Activated CD4-positive, alpha-beta memory T cell treated with anti-CD3 and anti-CD28 coated beads for 36 hours (primary cell): ENCODE measurements at regions of chr1 and their contacts with region 1.

Region 1: DNA sequence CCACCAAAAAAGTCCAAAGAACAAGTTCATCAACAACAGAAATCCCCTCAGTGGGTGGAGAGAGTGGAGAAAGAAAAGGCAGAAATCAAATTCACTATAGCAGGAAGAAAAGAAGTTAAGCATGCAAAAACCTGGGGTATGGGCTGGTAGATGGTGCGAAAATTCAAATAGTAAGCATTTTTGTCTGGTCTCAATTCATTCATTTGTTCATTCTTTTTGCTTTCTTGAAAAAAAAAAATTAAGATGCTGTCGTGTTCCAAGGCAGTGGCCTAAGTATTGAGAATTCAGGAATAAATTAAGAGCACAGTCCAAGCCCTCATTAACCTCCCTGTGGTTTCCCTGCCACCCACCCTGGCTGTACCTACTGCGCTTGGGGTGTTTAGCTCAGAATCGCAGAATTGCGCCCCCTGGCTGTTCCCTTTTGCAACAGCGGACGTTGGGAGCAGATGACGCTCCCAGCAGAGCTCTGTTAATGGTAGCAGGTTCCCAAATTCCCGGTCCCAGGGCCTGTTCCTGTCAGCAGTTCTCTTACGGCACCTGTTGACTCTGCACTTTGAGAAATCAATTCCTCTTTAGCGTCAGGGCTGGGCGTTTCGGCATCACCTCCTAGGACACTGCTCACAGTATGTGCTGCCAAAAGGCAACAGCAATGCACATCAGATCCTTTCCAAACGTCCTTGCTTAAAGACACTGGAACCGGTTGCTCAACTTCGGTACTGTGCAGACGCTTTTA is 34.0 kb upstream of the SSX2IP start:
- DNase-seq: peak; percentile 71
- H3K4me3 Mint-ChIP-seq: no peak overlapping the region
- H3K27ac Mint-ChIP-seq: no peak overlapping the region
- H3K4me1 Mint-ChIP-seq: peaks cover 14% of the 10 kb centered on the region
- H3K27me3 Mint-ChIP-seq: no peaks in the 10 kb centered on the region

Region 2: DNA sequence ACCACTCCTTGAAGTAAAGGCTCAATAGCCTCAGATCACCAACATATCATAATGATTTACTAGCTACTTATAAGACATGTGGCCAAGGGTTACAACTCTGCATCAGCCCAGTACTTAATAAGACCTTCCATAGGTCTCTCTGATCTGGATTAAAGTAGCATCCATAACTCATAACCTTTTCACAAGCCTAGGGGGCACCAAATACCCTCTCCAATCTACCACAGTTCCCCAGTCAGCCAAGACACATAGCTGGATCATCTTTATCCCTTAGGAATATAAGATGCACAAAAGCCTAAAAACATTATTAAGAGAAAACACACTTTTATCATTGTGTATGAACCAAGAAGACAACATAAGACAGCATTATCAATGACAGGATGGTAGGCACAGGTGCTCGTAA is 56.1 kb before region 1 on chr1:
- CTCF ChIA-PET with region 1: interaction called, 18 read pairs
- POLR2A ChIA-PET with region 1: no interaction called
- intact Hi-C with region 1: loop called (anchors 5 kb)
- DNase-seq: no peak
- H3K4me3 Mint-ChIP-seq: no peak overlapping the region
- H3K27ac Mint-ChIP-seq: no peak overlapping the region
- H3K4me1 Mint-ChIP-seq: peaks cover 2% of the 10 kb centered on the region
- H3K27me3 Mint-ChIP-seq: no peaks in the 10 kb centered on the region

Region 3: GRCh38 chr1:84690397-84691121 is 33.7 kb before region 1 on chr1 and contains the start of gene SSX2IP:
- CTCF ChIA-PET with region 1: interaction called, 16 read pairs
- POLR2A ChIA-PET with region 1: interaction called, 3 read pairs
- intact Hi-C with region 1: loop called (anchors 1 kb)
- DNase-seq: peak; percentile 99
- H3K4me3 Mint-ChIP-seq: peak within 1 kb of the TSS; percentile 94
- H3K27ac Mint-ChIP-seq: peak within 1 kb of the TSS; percentile 80
- H3K4me1 Mint-ChIP-seq: peaks cover 53% of the 10 kb centered on the region
- H3K27me3 Mint-ChIP-seq: peaks cover 2% of the 10 kb centered on the region
- total RNA-seq, gene SSX2IP: 10.9 to 11.6 TPM

Region 4: GRCh38 chr1:84712276-84712874 is 11.9 kb before region 1 on chr1:
- CTCF ChIA-PET with region 1: interaction called, 14 read pairs
- POLR2A ChIA-PET with region 1: no interaction called
- intact Hi-C with region 1: no loop called
- DNase-seq: no peak
- H3K4me3 Mint-ChIP-seq: no peak overlapping the region
- H3K27ac Mint-ChIP-seq: no peak overlapping the region
- H3K4me1 Mint-ChIP-seq: no peaks in the 10 kb centered on the region
- H3K27me3 Mint-ChIP-seq: peaks cover 2% of the 10 kb centered on the region

Region 5: DNA sequence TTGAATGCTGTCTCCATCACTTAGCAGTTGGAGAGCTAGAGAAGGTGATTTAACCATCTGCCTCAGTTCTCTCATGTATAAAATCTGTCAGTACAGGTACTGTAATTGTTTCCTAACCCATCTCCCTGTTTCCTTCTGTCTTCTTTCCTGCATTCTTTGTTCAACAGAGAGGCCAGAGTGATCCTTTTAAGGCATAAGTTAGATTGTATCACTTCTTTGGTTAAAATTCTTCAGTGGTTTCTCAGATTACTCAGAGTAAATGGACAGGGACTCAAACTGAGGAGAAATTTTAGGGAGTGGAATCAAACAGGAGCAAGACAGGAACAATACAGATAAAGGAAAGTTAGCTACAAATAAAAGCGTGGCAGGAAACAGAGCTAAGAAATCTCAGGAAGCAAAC is 11.2 kb after region 1 on chr1:
- CTCF ChIA-PET with region 1: interaction called, 19 read pairs
- POLR2A ChIA-PET with region 1: interaction called, 3 read pairs
- intact Hi-C with region 1: no loop called
- DNase-seq: no peak
- H3K4me3 Mint-ChIP-seq: no peak overlapping the region
- H3K27ac Mint-ChIP-seq: no peak overlapping the region
- H3K4me1 Mint-ChIP-seq: no peaks in the 10 kb centered on the region
- H3K27me3 Mint-ChIP-seq: peaks cover 36% of the 10 kb centered on the region

Region 6: GRCh38 chr1:84742653-84743052 is 18.4 kb after region 1 on chr1:
- CTCF ChIA-PET with region 1: interaction called, 19 read pairs
- POLR2A ChIA-PET with region 1: interaction called, 3 read pairs
- intact Hi-C with region 1: no loop called
- DNase-seq: peak; percentile 46
- H3K4me3 Mint-ChIP-seq: no peak overlapping the region
- H3K27ac Mint-ChIP-seq: no peak overlapping the region
- H3K4me1 Mint-ChIP-seq: peaks cover 17% of the 10 kb centered on the region
- H3K27me3 Mint-ChIP-seq: peaks cover 3% of the 10 kb centered on the region

Region 7: DNA sequence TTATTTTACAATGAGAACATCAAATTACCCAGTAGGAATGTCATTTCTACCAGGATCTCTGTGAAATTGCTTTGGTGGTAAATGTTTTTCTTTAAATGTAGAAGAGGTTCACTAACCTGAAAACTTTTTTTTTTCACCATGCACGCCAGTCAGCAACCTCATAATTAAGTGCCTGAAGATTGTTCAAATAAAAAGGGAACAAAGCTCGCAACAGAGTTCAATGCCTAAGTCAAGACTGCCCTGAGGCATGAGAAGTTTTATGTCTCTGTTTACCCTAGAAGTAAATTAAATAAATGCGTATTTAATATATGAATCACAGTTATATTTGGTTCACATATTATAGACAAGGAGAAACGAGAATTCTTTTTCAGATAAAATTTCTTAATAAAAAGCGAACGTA is 490.4 kb after region 1 on chr1:
- CTCF ChIA-PET with region 1: no interaction called
- POLR2A ChIA-PET with region 1: no interaction called
- intact Hi-C with region 1: no loop called
- DNase-seq: no peak
- H3K4me3 Mint-ChIP-seq: no peak overlapping the region
- H3K27ac Mint-ChIP-seq: no peak overlapping the region
- H3K4me1 Mint-ChIP-seq: no peaks in the 10 kb centered on the region
- H3K27me3 Mint-ChIP-seq: peaks cover 14% of the 10 kb centered on the region